WTC11 (cell line): ENCODE measurements at regions of chr15 and their contacts with region 1.

Region 1: DNA sequence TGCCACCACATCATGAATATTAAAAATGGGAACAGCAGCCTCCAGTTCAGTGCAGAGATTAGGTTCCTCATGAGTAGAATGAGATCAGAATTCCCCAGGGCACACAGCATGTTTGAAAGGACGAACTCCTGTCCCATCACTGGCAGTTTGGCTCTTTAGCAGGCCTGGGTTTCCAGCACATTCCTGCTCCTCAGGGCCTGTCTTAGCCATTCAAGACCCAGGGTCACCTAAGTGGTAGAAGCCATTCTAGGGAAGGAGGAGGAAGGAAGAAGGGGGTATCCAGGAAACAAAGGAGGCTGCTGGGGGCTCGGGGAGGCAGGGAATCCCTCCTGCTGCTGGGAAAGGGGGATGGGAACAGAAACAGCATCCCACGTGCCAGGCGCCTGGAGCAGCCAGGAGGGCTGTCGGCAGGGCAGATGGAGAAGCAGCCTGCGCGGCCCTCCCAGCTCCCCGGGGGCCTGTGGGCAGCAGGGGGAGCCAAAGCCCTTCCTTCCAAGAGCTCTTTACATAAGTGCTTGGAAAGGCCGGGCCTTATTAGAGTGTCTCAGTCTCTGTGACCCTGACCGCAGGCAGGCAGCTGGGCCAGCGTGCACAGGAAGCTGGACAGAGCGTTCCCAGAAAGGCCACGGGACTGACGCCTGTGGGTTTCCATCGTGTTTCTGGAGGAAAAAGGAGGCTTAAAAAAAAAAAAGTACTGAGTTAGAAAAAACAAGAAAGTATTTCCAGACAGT is 24.7 kb downstream of the LOXL1 start:
- DNase-seq: peak; percentile 91
- ATAC-seq: peak; percentile 93
- H3K4me3 Mint-ChIP-seq: no peak overlapping the region
- H3K27ac Mint-ChIP-seq: peak overlapping the region; percentile 97
- H3K4me1 Mint-ChIP-seq: peaks cover 10% of the 10 kb centered on the region
- H3K27me3 Mint-ChIP-seq: peaks cover 3% of the 10 kb centered on the region; the same call in 1 of the 2 replicates
- CTCF ChIP-seq: peak; percentile 37; the same call in 1 of the 2 replicates

Region 2: GRCh38 chr15:73838831-73839426 is 112.1 kb before region 1 on chr15:
- CTCF ChIA-PET with region 1: no interaction called
- POLR2A ChIA-PET with region 1: no interaction called
- DNase-seq: no peak
- ATAC-seq: no peak
- H3K4me3 Mint-ChIP-seq: no peak overlapping the region
- H3K27ac Mint-ChIP-seq: no peak overlapping the region
- H3K4me1 Mint-ChIP-seq: peaks cover 15% of the 10 kb centered on the region
- H3K27me3 Mint-ChIP-seq: peaks cover 4% of the 10 kb centered on the region; the same call in 1 of the 2 replicates
- CTCF ChIP-seq: no peak

Region 3: GRCh38 chr15:73873889-73874511 is 77.0 kb before region 1 on chr15:
- CTCF ChIA-PET with region 1: interaction called, 12 read pairs
- POLR2A ChIA-PET with region 1: no interaction called
- DNase-seq: no peak
- ATAC-seq: peak; percentile 38; the same call in 1 of the 2 replicates
- H3K4me3 Mint-ChIP-seq: no peak overlapping the region
- H3K27ac Mint-ChIP-seq: no peak overlapping the region
- H3K4me1 Mint-ChIP-seq: peaks cover 7% of the 10 kb centered on the region
- H3K27me3 Mint-ChIP-seq: no peaks in the 10 kb centered on the region; the same call in 1 of the 2 replicates
- CTCF ChIP-seq: 0 out of 2 replicates have a peak, but pooled peaks have one; percentile 39

Region 4: DNA sequence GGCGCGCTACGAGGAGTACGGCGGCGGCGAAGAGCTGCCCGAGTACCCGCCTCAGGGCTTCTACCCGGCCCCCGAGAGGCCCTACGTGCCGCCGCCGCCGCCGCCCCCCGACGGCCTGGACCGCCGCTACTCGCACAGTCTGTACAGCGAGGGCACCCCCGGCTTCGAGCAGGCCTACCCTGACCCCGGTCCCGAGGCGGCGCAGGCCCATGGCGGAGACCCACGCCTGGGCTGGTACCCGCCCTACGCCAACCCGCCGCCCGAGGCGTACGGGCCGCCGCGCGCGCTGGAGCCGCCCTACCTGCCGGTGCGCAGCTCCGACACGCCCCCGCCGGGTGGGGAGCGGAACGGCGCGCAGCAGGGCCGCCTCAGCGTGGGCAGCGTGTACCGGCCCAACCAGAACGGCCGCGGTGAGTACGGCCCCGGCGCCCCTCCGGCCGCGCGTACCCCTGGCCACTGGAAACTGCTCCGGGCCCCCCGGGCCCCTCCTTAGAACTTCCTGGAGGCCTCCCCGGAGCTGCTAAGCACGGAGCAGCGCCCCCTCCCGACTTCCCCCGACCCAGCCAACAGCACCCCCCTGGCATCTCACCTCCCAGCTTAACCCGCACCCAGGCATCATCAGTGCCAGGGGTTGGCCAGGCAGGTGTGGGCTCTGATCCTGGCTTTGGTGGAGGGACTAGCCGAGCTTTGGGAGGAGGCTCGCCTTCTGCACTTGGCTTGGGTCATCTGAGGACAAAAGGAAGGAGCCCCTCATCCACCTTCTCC is 23.3 kb before region 1 on chr15:
- CTCF ChIA-PET with region 1: interaction called, 61 read pairs
- POLR2A ChIA-PET with region 1: no interaction called
- DNase-seq: peak; percentile 74
- ATAC-seq: peak; percentile 38
- H3K4me3 Mint-ChIP-seq: peak overlapping the region; percentile 68
- H3K27ac Mint-ChIP-seq: no peak overlapping the region
- H3K4me1 Mint-ChIP-seq: peaks cover 43% of the 10 kb centered on the region
- H3K27me3 Mint-ChIP-seq: peaks cover 11% of the 10 kb centered on the region
- CTCF ChIP-seq: peak; percentile 33; the same call in 1 of the 2 replicates

Region 5: GRCh38 chr15:73964736-73965093 is 13.7 kb after region 1 on chr15:
- CTCF ChIA-PET with region 1: interaction called, 93 read pairs
- POLR2A ChIA-PET with region 1: no interaction called
- DNase-seq: peak; percentile 94
- ATAC-seq: peak; percentile 96
- H3K4me3 Mint-ChIP-seq: peak overlapping the region; percentile 50
- H3K27ac Mint-ChIP-seq: no peak overlapping the region
- H3K4me1 Mint-ChIP-seq: peaks cover 27% of the 10 kb centered on the region
- H3K27me3 Mint-ChIP-seq: no peaks in the 10 kb centered on the region
- CTCF ChIP-seq: peak; percentile 91

Region 6: DNA sequence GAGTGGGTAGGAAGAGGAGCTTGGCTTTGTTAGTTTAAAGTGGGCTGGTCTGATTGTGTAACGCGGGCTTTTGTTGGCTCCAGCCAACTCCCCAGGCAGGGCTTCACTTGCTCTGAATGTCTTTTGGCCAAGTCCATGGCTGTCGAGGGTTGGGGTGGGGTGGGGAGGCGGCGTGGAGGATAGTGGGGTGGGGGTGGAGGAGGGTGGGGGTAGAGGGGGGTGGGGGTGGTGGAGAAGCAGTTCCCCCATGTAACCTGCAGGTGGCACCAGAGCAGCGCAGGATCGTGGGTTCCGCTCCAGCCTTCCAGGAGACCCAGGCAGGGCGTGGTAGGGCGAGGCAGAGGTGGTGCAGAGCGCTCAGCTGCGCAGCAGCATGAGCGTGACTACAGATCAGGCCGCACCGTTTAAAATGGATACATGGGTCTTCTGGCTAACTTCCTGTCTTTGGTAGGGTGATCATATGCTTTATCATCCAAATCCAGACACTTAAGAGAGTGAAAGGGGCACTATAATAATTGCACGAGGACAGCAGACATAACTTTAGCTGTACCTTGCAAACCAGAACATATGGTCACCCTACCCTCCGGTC is 103.0 kb after region 1 on chr15:
- CTCF ChIA-PET with region 1: interaction called, 18 read pairs
- POLR2A ChIA-PET with region 1: no interaction called
- DNase-seq: peak; percentile 82
- ATAC-seq: peak; percentile 97
- H3K4me3 Mint-ChIP-seq: no peak overlapping the region
- H3K27ac Mint-ChIP-seq: no peak overlapping the region
- H3K4me1 Mint-ChIP-seq: peaks cover 17% of the 10 kb centered on the region
- H3K27me3 Mint-ChIP-seq: peaks cover 21% of the 10 kb centered on the region
- CTCF ChIP-seq: peak; percentile 73